Activated CD8-positive, alpha-beta T cell treated with anti-CD3 and anti-CD28 coated beads for 36 hours (primary cell): ENCODE measurements at regions of chr17 and their contacts with region 1.

Region 1: GRCh38 chr17:30104575-30105339 is 11.9 kb upstream of the NSRP1 start:
- DNase-seq: peak; percentile 83
- ATAC-seq: peak; percentile 98
- H3K4me3 Mint-ChIP-seq: peak overlapping the region; percentile 71
- H3K27ac Mint-ChIP-seq: no peak overlapping the region
- H3K4me1 Mint-ChIP-seq: peaks cover 4% of the 10 kb centered on the region
- H3K27me3 Mint-ChIP-seq: peaks cover 2% of the 10 kb centered on the region
- CTCF ChIP-seq: peak; percentile 91

Region 2: GRCh38 chr17:30093463-30094147 is 11.2 kb before region 1 on chr17:
- CTCF ChIA-PET with region 1: interaction called, 90 read pairs
- POLR2A ChIA-PET with region 1: no interaction called
- intact Hi-C with region 1: no loop called
- DNase-seq: peak; percentile 58
- ATAC-seq: peak; percentile 69
- H3K4me3 Mint-ChIP-seq: no peak overlapping the region
- H3K27ac Mint-ChIP-seq: no peak overlapping the region
- H3K4me1 Mint-ChIP-seq: peaks cover 4% of the 10 kb centered on the region
- H3K27me3 Mint-ChIP-seq: peaks cover 11% of the 10 kb centered on the region
- CTCF ChIP-seq: peak; percentile 91

Region 3: DNA sequence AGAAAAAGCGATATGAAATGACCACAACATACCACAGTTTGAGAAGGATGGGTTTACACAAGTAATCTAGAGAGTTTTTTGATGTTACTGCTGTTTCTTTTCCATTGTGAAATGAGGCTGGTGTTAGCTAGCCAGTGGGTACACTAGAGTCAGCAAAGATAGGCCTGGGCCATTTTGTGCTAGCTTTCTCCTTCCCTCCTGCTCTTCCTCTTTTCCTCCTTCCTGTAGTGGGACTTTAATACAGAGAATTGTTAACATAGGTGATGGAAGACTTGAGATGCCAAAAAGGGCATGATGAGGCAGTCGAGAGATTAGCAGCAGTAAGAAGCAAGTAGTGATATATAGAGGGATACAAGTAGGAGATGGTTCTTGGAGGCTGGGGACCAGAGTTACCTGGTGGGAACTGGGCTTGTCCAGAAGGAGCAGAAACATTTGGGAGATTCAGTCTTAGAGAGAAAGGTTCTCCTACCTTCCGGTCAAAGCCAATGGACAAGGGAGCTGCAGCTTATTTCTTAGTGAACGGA is 19.6 kb after region 1 on chr17:
- CTCF ChIA-PET with region 1: interaction called, 48 read pairs
- POLR2A ChIA-PET with region 1: no interaction called
- intact Hi-C with region 1: no loop called
- DNase-seq: no peak
- ATAC-seq: no peak
- H3K4me3 Mint-ChIP-seq: no peak overlapping the region
- H3K27ac Mint-ChIP-seq: no peak overlapping the region
- H3K4me1 Mint-ChIP-seq: peaks cover 41% of the 10 kb centered on the region
- H3K27me3 Mint-ChIP-seq: no peaks in the 10 kb centered on the region
- CTCF ChIP-seq: no peak

Region 4: GRCh38 chr17:30256756-30257506 is 152.2 kb after region 1 on chr17:
- CTCF ChIA-PET with region 1: interaction called, 10 read pairs
- POLR2A ChIA-PET with region 1: no interaction called
- intact Hi-C with region 1: no loop called
- DNase-seq: no peak
- ATAC-seq: no peak
- H3K4me3 Mint-ChIP-seq: no peak overlapping the region
- H3K27ac Mint-ChIP-seq: no peak overlapping the region
- H3K4me1 Mint-ChIP-seq: peaks cover 6% of the 10 kb centered on the region
- H3K27me3 Mint-ChIP-seq: no peaks in the 10 kb centered on the region
- CTCF ChIP-seq: no peak

Region 5: GRCh38 chr17:30336369-30337171 is 231.8 kb after region 1 on chr17:
- CTCF ChIA-PET with region 1: interaction called, 54 read pairs
- POLR2A ChIA-PET with region 1: no interaction called
- intact Hi-C with region 1: loop called (anchors 5 kb)
- DNase-seq: peak; percentile 70
- ATAC-seq: peak; percentile 26
- H3K4me3 Mint-ChIP-seq: no peak overlapping the region
- H3K27ac Mint-ChIP-seq: peak overlapping the region; percentile 12
- H3K4me1 Mint-ChIP-seq: peaks cover 36% of the 10 kb centered on the region
- H3K27me3 Mint-ChIP-seq: no peaks in the 10 kb centered on the region
- CTCF ChIP-seq: peak; percentile 99

Region 6: DNA sequence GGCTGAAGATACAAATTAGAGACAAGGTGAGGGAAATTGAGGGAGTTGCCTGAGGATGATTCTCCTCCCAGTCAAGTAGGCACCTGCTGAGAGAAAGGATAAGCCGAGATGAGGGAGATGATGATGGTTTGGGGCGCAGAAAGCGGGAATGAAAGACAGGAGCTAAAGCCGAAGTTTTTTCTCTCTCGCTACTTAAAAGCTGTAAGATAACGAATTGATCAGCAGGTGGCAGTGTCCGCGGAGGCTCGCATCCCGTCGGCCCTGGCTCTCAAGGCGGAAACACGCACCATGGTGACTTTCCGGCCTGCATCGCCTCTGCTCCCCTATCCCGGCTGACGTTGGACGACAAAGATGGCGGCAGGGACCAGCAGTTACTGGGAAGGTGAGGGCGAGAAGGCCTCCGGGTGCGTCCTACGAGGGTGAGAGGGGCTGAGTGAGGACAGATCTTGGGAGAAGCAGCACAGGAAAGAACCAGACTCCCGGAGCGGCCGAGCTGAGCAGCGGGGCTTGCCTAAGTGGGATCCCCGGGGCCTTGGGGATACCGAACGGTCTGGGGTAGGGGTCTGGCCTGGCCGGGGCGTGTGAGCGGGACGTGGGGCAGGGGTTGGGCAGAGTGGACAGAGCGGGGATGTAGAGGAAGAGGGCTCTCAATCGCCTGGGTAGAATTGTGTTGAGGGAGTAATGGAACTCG is 372.5 kb after region 1 on chr17 and contains the start of gene GOSR1:
- CTCF ChIA-PET with region 1: interaction called, 13 read pairs
- POLR2A ChIA-PET with region 1: no interaction called
- intact Hi-C with region 1: no loop called
- DNase-seq: peak; percentile 97
- ATAC-seq: peak; percentile 99
- H3K4me3 Mint-ChIP-seq: peak within 1 kb of the TSS; percentile 97
- H3K27ac Mint-ChIP-seq: peak within 1 kb of the TSS; percentile 98
- H3K4me1 Mint-ChIP-seq: peaks cover 32% of the 10 kb centered on the region
- H3K27me3 Mint-ChIP-seq: peaks cover 2% of the 10 kb centered on the region
- CTCF ChIP-seq: peak; percentile 72
- total RNA-seq, gene GOSR1: 37.1 to 38.8 TPM